ENCODE measurements at regions of chr5 and their contacts with region 1.

Region 1: DNA sequence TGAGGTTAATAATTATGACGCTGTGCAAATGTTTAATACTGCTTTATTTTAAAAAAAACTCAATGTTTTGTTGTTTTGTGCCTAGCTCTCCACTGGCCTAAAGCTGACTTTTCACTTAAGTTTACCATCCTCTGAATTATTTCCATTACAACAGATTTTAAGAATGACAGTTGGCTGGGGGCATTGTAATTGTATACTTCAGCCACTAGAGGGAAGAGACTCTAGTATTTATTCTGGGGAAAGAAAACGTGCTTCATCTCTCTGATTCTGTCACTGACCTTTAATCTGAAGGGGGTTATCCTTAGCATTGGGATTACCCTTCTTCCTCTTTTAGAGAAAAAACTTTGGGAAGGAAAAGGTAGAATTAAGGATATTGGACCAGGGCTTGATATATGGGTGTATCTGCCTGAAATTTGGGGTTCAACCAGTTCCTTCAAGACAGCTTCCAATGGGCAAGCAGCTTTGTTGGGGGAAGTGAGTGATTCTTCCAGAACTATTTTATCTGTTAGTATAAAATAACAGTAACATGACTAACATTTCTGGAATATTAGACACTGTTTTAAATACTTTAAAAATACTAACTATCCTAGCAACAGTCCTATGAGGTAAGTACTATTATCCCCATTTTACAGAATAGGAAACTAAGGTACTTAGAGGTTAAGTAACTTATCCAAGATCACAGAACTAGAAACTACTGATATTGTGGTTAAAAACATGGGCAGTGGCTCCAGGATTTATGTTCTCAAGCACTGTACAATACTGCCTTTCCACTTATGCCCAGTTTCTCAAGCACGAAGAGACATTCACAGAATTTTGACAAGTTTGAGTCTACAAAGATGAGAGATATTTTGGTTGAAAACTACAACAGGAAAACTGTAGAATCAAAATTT is 208.4 kb downstream of the CD180 start:
- DNase-seq: peak; percentile 36
- ATAC-seq: peak; percentile 60
- H3K4me3 ChIP-seq: no peak overlapping the region
- H3K27ac ChIP-seq: no peak overlapping the region
- H3K4me1 ChIP-seq: peaks cover 35% of the 10 kb centered on the region
- H3K27me3 ChIP-seq: no peaks in the 10 kb centered on the region; a peak in 1 of 5 replicates
- CTCF ChIP-seq: peak; percentile 68
- EP300 ChIP-seq: no peak
- POLR2A ChIP-seq: no peak
- RAD21 ChIP-seq: peak; percentile 65

Region 2: DNA sequence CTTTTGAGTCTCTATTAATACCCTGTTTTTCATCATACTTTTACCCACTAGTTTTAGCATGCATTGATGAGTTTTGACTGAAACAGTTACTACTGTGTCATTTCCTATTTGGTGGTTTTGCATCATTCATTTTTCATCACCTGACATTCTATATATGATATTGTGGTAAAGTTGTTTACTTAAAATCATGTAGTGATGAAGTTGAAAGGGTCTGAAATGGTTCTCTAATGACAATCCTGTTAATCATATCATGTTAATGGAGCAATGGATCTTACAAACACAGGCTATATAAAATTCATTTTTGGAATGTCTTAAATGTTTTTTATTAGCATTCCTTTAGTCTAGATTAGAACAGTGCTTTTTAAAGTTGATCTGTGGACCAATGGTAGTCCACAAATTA is 977.7 kb before region 1 on chr5:
- CTCF ChIA-PET with region 1: no interaction called
- POLR2A ChIA-PET with region 1: no interaction called
- in situ Hi-C with region 1: no loop called
- intact Hi-C with region 1: no loop called
- DNase-seq: no peak
- ATAC-seq: no peak
- H3K4me3 ChIP-seq: no peak overlapping the region
- H3K27ac ChIP-seq: no peak overlapping the region
- H3K4me1 ChIP-seq: no peaks in the 10 kb centered on the region
- H3K27me3 ChIP-seq: no peaks in the 10 kb centered on the region
- CTCF ChIP-seq: no peak
- EP300 ChIP-seq: no peak
- POLR2A ChIP-seq: no peak
- RAD21 ChIP-seq: no peak

Region 3: GRCh38 chr5:66840511-66841013 is 147.6 kb before region 1 on chr5:
- CTCF ChIA-PET with region 1: no interaction called
- POLR2A ChIA-PET with region 1: no interaction called
- in situ Hi-C with region 1: no loop called
- intact Hi-C with region 1: no loop called
- DNase-seq: peak; percentile 29
- ATAC-seq: peak; percentile 72
- H3K4me3 ChIP-seq: no peak overlapping the region
- H3K27ac ChIP-seq: no peak overlapping the region
- H3K4me1 ChIP-seq: peaks cover 10% of the 10 kb centered on the region
- H3K27me3 ChIP-seq: no peaks in the 10 kb centered on the region
- CTCF ChIP-seq: no peak
- EP300 ChIP-seq: no peak
- POLR2A ChIP-seq: no peak
- RAD21 ChIP-seq: no peak

Region 4: DNA sequence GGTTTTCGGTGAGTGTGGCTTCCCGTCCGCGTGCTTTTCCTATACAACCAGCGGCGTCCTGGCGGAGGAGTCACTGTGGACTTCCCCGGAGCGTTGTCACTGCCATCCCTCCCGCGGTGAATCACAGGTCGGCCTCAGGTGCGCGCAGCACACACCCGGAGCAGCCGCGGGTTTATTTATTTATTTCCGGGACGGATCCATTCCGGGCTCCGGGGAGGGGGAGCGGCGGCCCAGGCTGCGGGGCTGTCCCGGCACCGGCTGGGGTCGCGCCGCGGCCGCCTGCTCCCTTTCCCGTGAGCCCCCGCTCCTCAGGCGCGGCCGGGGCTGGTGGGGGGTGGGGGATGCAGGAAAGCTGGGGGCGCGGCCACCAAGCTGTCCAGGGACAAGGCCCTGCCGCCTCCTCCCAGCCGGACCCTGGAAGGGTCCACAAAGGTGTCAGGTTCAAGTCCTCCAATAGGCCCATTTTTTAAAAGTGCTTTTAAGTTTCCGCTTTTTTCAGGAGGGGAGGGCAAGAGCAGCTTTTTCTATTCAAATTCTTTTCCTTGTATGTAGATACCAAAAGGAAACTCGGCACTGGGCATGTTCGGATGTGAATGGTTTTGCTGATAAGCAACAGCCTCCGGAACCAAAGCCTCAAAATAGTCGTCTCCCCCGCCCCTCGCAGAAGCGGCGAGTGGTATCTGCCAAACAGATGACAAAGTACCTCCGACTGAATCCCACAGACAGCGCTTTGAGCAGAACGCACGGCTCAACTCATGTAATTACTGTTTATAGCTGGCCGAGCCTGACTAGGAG is 15.9 kb after region 1 on chr5:
- CTCF ChIA-PET with region 1: no interaction called
- POLR2A ChIA-PET with region 1: interaction called, 21 read pairs
- in situ Hi-C with region 1: no loop called
- intact Hi-C with region 1: loop called (anchors 2 kb)
- DNase-seq: peak; percentile 96
- ATAC-seq: peak; percentile 91
- H3K4me3 ChIP-seq: peak overlapping the region; percentile 65 to 74 (median 73)
- H3K27ac ChIP-seq: peak overlapping the region; percentile 64
- H3K4me1 ChIP-seq: peaks cover 62% of the 10 kb centered on the region
- H3K27me3 ChIP-seq: no peaks in the 10 kb centered on the region
- CTCF ChIP-seq: no peak
- EP300 ChIP-seq: peak; percentile 16 to 31; a peak in 1 of 4 replicates
- POLR2A ChIP-seq: peak; percentile 61 to 85
- RAD21 ChIP-seq: no peak; the same call in 1 of the 2 replicates

Region 5: GRCh38 chr5:67142816-67143215 is 154.6 kb after region 1 on chr5:
- CTCF ChIA-PET with region 1: no interaction called
- POLR2A ChIA-PET with region 1: interaction called, 6 read pairs
- in situ Hi-C with region 1: no loop called
- intact Hi-C with region 1: loop called (anchors 5 kb)
- DNase-seq: peak; percentile 65
- ATAC-seq: peak; percentile 52
- H3K4me3 ChIP-seq: no peak overlapping the region
- H3K27ac ChIP-seq: peak overlapping the region; percentile 86
- H3K4me1 ChIP-seq: peaks cover 64% of the 10 kb centered on the region
- H3K27me3 ChIP-seq: no peaks in the 10 kb centered on the region
- CTCF ChIP-seq: no peak
- EP300 ChIP-seq: 0 out of 4 replicates have a peak, but pooled peaks of 1 of the 2 experiments have one; percentile 10
- POLR2A ChIP-seq: no peak
- RAD21 ChIP-seq: no peak

Region 6: DNA sequence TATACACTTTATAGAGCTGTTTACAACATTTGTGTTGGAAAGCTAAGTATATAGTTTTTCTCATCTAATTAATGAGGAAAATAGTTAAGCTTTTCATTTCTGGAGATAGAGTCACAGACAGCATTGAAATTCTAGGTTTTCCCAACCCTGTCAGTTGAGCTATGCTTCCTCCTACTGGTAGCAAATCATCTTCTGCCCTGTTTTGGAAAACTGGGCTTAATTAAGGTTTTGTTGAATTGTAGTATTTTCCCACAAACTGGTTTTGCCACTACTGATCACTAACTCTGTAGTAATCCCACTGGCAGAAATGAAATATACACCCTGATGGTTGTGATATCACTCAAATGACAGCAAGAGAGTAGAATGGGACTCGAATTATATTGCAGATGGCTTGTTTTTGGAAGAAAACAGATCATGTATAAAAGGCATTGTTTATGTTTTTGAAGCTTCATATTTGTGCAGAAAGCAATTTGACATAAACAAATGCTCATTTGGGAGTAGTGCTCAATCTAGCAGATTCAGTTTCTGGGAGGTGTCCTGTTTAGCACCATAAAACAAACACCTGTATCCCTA is 161.8 kb after region 1 on chr5:
- CTCF ChIA-PET with region 1: interaction called, 6 read pairs
- POLR2A ChIA-PET with region 1: no interaction called
- in situ Hi-C with region 1: no loop called
- intact Hi-C with region 1: loop called (anchors 2 kb)
- DNase-seq: no peak
- ATAC-seq: no peak
- H3K4me3 ChIP-seq: no peak overlapping the region
- H3K27ac ChIP-seq: no peak overlapping the region
- H3K4me1 ChIP-seq: peaks cover 30% of the 10 kb centered on the region
- H3K27me3 ChIP-seq: no peaks in the 10 kb centered on the region
- CTCF ChIP-seq: peak; percentile 42
- EP300 ChIP-seq: no peak
- POLR2A ChIP-seq: no peak
- RAD21 ChIP-seq: peak; percentile 50; the same call in 1 of the 2 replicates

Region 7: GRCh38 chr5:67209142-67209771 is 221.1 kb after region 1 on chr5:
- CTCF ChIA-PET with region 1: interaction called, 9 read pairs
- POLR2A ChIA-PET with region 1: no interaction called
- in situ Hi-C with region 1: loop called (anchors 10 kb)
- intact Hi-C with region 1: loop called (anchors 1 kb)
- DNase-seq: peak; percentile 61
- ATAC-seq: peak; percentile 94
- H3K4me3 ChIP-seq: no peak overlapping the region
- H3K27ac ChIP-seq: no peak overlapping the region
- H3K4me1 ChIP-seq: peaks cover 5% of the 10 kb centered on the region; the same call in 1 of the 2 replicates
- H3K27me3 ChIP-seq: no peaks in the 10 kb centered on the region
- CTCF ChIP-seq: peak; percentile 91
- EP300 ChIP-seq: no peak
- POLR2A ChIP-seq: no peak
- RAD21 ChIP-seq: peak; percentile 76